Activated T-helper 2 cell treated with anti-CD3 and anti-CD28 coated beads, Interferon-gamma antibody, Interleukin-2, Interleukin-4, amounts not matched to agents 10 μg/mL and 5 μg/mL and 100 μg/mL, durations not matched to agents 14 hours and 24 hours and 36 hours (primary cell): ENCODE measurements at regions of chr16 and their contacts with region 1.

Region 1: DNA sequence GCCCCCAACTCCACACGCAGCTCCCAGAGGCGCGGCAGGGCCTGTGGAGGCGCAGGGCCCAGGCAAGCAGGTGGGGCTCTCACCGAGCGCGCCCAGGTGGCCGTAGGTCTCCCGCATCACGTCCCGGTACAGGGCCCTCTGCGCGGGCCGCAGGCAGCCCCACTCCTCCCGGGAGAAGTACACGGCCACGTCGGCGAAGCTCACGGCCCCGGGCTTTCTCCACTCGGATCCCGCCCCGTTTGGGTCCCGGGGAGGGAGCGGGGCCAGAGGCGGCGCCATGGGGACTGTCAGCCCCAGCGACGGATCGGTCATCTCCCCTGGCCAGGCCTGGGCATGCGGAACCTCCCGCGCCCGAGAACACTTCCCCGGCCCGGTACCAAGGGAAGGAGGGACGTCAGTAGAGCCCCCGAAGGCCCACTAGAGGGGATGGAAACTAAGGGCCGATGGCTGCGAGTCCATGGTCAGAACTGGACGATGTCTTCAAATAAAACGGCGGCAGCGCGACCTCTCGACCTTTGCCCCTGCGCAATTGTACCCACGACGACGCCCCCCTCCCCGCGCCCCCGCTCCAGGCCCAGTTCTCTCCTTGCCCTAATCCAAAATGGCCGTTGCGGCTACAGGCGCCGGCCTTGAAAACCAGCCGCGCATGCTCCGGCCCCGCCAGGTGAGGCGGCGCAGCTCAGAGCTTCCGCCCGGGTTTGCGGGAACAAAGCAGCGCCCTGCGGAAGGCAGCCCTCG is at the start of gene ZNF747:
- DNase-seq: peak; percentile 86
- H3K4me3 Mint-ChIP-seq: peak within 1 kb of the TSS; percentile 99
- H3K27ac Mint-ChIP-seq: peak within 1 kb of the TSS; percentile 100
- H3K4me1 Mint-ChIP-seq: peaks cover 27% of the 10 kb centered on the region
- H3K27me3 Mint-ChIP-seq: no peaks in the 10 kb centered on the region
- total RNA-seq, gene ZNF747: 11.8 and 11.9 TPM in 2 replicates

Region 2: DNA sequence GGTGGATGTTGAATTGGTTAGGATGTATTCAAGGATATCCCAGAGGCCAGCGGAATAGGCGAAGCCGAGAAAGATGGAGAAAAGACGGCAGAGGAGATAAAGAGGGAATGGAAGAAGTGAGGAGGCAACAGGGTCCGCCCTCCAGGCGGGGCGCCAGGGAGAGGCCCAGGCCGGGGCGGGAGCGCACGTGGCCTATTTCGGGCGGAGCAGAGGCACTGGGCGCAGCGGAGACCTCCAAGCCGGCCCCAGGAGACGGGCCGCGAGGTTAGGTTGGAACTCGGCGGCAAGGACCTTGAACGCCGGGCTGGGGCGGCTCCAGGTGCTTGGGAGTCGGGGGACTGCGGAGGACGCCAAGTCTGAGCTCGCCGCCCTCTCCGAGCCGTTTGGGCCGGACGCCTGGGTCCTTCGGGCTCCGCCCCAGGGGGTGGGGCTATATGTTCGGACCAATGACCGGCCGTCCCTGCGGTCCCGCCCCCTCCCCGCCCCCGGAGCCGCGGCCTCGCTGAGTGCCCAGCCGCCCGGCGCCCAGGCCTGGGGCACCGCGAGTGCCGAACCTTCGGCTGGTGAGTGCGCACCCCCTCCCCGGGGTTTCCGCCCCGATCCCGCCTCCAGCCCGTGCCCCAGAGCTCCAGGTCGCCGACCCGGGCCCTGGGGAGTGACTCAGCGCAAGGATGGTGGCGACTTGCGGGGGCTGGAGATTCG is 127.3 kb before region 1 on chr16 and contains the start of gene ZNF771:
- intact Hi-C with region 1: no loop called
- DNase-seq: peak; percentile 82
- H3K4me3 Mint-ChIP-seq: peak within 1 kb of the TSS; percentile 95
- H3K27ac Mint-ChIP-seq: peak within 1 kb of the TSS; percentile 97
- H3K4me1 Mint-ChIP-seq: peaks cover 28% of the 10 kb centered on the region
- H3K27me3 Mint-ChIP-seq: no peaks in the 10 kb centered on the region
- total RNA-seq, gene ZNF771: 8.3 and 9.3 TPM in 2 replicates

Region 3: DNA sequence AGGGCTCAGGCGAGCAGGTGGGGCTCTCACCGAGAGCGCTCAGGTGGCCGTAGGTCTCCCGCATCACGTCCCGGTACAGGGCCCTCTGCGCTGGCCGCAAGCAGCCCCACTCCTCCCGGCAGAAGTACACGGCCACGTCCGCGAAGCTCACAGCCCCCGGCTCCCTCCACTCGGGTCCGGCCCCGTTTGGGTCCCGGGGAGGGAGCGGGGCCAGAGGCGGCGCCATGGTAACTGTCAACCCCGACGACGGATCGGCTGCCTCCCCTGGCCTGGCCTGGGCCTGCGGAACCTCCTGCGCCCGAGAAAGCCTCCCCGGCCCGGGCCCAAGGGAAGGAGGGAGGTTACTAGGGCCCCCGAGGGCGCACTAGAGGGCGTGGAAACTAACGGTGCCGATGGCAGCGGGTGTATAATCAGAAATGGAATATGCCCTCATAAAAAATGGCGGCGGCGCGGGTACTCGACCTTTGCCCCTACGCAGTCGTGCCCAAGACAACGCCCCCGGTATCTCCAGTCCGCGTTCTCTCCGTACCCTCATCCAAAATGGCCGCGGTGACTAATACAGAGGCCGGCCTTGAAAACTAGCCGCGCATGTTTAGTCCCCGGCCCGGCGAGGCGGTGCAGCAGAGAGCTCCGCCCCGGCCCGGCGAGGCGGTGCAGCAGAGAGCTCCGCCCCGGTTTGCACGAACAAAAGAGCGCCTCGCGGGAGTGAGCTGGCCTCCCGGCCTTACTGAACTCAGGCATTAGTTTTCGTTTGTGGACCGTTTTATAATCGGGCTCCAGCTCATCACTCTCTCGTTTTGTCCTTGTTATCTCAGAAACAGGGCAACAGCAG is 23.6 kb after region 1 on chr16 and contains the start of gene ZNF764:
- intact Hi-C with region 1: loop called (anchors 1 kb)
- DNase-seq: peak; percentile 97
- H3K4me3 Mint-ChIP-seq: peak within 1 kb of the TSS; percentile 83
- H3K27ac Mint-ChIP-seq: peak within 1 kb of the TSS; percentile 95
- H3K4me1 Mint-ChIP-seq: peaks cover 35% of the 10 kb centered on the region
- H3K27me3 Mint-ChIP-seq: peaks cover 1% of the 10 kb centered on the region
- total RNA-seq, gene ZNF764: 14.5 and 14.6 TPM in 2 replicates

Region 4: DNA sequence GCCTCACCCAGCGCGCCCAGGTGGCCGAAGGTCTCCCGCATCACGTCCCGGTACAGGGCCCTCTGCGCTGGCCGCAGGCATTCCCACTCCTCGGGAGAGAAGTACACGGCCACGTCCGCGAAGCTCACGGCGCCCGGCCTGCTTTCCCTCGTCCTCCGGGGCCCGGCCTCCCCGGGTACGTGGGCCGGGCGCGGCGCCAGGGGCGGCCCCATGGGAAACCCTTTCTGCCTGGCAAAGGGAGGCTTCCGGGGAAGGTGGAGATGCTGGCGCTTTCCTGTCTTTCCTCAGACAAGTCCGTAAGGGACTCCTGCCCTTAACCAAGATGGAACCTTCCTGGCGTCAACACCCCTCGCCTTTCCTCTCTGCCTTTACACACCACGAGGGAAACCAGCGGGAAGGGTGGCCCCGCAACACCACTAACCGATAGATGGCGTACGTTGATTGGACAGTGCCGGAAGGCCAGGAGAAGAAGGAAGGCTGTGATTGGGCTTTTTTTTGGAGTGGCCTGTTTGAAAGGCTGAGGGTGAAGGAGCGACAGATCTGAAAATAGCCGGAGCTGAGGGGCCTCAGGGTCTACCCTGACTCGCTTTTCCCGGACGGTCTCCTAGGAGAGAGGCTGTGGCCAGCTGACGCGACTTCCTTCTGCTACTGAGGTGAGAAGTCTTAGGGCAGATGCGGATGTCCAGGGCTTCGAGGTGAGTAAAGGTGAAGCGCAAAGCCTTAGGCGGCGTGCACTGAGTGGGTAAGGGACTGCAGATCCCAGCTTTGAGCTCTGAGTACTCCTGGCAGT is 51.1 kb after region 1 on chr16 and contains the start of gene ZNF785:
- intact Hi-C with region 1: loop called (anchors 1 kb)
- DNase-seq: peak; percentile 92
- H3K4me3 Mint-ChIP-seq: peak within 1 kb of the TSS; percentile 91
- H3K27ac Mint-ChIP-seq: peak within 1 kb of the TSS; percentile 82
- H3K4me1 Mint-ChIP-seq: peaks cover 17% of the 10 kb centered on the region
- H3K27me3 Mint-ChIP-seq: no peaks in the 10 kb centered on the region
- total RNA-seq, gene ZNF785: 18.9 and 22.2 TPM in 2 replicates

Region 5: DNA sequence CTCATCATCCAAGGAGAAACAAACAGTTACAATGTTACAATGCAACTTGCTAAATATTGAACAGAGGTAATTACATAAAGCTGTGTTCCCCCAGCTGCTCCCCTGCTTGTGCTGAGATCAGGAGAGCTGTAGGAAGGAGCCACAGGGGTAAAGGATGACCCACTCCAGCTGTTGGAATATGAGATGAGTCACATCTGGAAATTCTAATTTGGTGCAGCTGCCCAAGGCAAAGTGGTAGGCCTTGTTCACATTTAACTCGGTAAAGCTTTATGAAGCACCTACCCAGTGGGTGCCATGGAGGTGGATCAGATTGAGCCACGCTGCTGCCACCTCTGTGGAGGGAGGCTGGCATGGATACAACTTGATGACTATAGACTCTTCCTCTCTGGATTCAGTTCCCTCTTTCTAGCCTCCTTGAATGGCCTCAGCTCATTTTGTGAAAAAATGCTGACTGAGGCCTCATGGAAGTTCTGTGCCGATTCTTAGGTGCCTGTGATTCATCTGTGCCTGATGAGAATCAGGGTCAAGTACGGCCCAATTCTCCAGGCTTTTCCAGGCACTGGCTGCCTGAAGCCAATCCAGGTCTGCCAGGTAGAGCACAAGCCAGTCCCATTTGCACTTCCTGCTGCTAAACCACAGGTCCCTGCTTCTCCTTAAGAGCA is 68.2 kb after region 1 on chr16:
- intact Hi-C with region 1: loop called (anchors 2 kb)
- DNase-seq: no peak
- H3K4me3 Mint-ChIP-seq: no peak overlapping the region
- H3K27ac Mint-ChIP-seq: no peak overlapping the region
- H3K4me1 Mint-ChIP-seq: peaks cover 9% of the 10 kb centered on the region
- H3K27me3 Mint-ChIP-seq: no peaks in the 10 kb centered on the region

Region 6: DNA sequence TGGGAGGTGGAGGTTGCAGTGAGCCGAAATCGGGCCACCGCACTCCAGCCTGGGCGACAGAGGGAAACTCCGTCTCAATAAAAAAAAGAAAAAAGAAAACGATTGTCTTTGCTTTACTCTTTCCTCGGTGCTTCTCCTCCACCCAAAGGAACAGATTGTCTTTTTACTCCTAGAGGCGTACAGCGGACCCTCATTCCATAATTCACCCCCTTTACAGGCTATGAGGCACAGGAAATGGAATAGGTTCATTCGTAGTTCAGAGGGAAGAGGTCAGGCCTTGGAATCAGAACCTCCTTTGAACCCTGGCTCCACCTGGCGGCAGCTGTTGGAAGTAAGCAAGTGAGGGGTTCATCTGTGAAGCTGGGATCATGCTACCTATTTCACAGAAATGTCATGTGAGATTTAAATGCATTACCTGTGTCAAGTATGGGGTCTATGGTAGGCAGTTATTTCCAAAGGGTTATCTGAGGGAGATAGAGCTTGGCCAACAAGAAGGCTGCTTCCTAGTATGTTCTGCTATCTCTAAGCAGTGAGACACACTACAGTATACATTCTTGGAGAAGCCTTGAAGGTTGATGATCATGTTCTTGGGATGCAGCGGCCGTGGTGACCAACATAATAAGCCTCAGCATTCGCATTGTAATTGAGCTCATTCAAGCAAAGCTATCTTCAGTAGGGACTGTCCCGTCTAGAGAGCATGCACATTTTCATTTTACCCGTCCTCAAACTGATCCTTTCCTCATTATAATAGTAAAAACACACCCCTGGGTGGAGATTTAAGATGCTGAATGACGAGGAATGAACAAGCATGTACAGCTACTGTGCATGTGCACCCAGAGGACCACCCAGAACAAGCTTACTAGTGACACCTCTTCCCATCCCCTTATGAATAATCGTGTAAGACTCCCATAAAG is 94.3 kb after region 1 on chr16:
- intact Hi-C with region 1: loop called (anchors 5 kb)
- DNase-seq: peak; percentile 77
- H3K4me3 Mint-ChIP-seq: peak overlapping the region; percentile 46
- H3K27ac Mint-ChIP-seq: peak overlapping the region; percentile 60
- H3K4me1 Mint-ChIP-seq: peaks cover 4% of the 10 kb centered on the region
- H3K27me3 Mint-ChIP-seq: peaks cover under 1% of the 10 kb centered on the region